ENCODE measurements at regions of chr2 and their contacts with region 1.

Region 1: DNA sequence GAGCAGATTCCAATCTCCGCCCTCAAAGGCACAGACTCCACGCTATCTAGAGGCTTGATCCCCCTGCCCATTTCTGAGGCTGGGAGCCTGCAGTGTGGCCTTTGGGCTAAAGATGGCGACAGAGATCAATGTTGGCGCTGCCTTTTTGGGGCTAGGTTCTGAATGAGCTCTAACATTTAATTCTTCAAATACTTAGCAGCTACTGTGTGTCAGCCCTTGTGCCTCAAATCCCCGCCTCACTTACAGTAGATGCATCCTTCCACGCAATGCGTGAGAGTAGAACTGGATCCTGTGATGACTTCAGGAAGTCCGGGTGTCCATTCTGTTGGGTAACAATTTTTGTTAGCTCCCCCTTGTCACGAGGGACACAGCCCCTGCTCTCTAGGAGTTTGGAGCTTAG is 12.4 kb downstream of the IL1F10 start:
- DNase-seq: peak; percentile 40 to 86 (median 50)
- H3K4me3 ChIP-seq: no peak overlapping the region
- H3K4me3 Mint-ChIP-seq: no peak overlapping the region
- H3K27ac ChIP-seq: no peak overlapping the region
- H3K27ac Mint-ChIP-seq: no peak overlapping the region
- H3K4me1 ChIP-seq: peaks cover 12% of the 10 kb centered on the region in 2 donors
- H3K4me1 Mint-ChIP-seq: peaks cover 34% of the 10 kb centered on the region
- H3K27me3 ChIP-seq: no peaks in the 10 kb centered on the region
- H3K27me3 Mint-ChIP-seq: peaks cover 0 to 5% (median 2%) of the 10 kb centered on the region in 3 donors
- CTCF ChIP-seq: peak; percentile 89

Region 2: GRCh38 chr2:113105047-113105785 is 25.1 kb after region 1 on chr2:
- intact Hi-C with region 1: loop called in 1 of 2 experiments (anchors 2 kb)
- DNase-seq: peak in 2 of 3 donors; percentile 59 to 84
- H3K4me3 ChIP-seq: no peak overlapping the region
- H3K4me3 Mint-ChIP-seq: no peak overlapping the region
- H3K27ac ChIP-seq: no peak overlapping the region
- H3K27ac Mint-ChIP-seq: peak overlapping the region in 3 of 7 donors; percentile 6 to 57 (median 26)
- H3K4me1 ChIP-seq: no peaks in the 10 kb centered on the region
- H3K4me1 Mint-ChIP-seq: peaks cover 13% of the 10 kb centered on the region
- H3K27me3 ChIP-seq: no peaks in the 10 kb centered on the region
- H3K27me3 Mint-ChIP-seq: peaks cover 0 to 7% (median 0%) of the 10 kb centered on the region in 3 donors
- CTCF ChIP-seq: no peak

Region 3: GRCh38 chr2:113126845-113127645 is 46.9 kb after region 1 on chr2 and contains the start of gene IL1RN:
- intact Hi-C with region 1: loop called (anchors 2 to 5 kb)
- DNase-seq: peak; percentile 90 to 98 (median 95)
- H3K4me3 ChIP-seq: peak within 1 kb of the TSS; percentile 75 to 99 (median 89)
- H3K4me3 Mint-ChIP-seq: peak within 1 kb of the TSS; percentile 97 to 98
- H3K27ac ChIP-seq: peak within 1 kb of the TSS; percentile 91 to 95
- H3K27ac Mint-ChIP-seq: peak within 1 kb of the TSS; percentile 97 to 99 (median 99)
- H3K4me1 ChIP-seq: peaks cover 72 to 89% of the 10 kb centered on the region in 2 donors
- H3K4me1 Mint-ChIP-seq: peaks cover 82% of the 10 kb centered on the region
- H3K27me3 ChIP-seq: no peaks in the 10 kb centered on the region
- H3K27me3 Mint-ChIP-seq: peaks cover 0 to 2% (median 0%) of the 10 kb centered on the region in 3 donors
- CTCF ChIP-seq: no peak
- polyA plus RNA-seq, gene IL1RN: 89.9 to 109 (median 92.0) TPM

Region 4: GRCh38 chr2:113198790-113199612 is 118.9 kb after region 1 on chr2:
- intact Hi-C with region 1: loop called (anchors 1 to 5 kb)
- DNase-seq: peak; percentile 64 to 76 (median 64)
- H3K4me3 ChIP-seq: peak overlapping the region; percentile 32 to 76 (median 38)
- H3K4me3 Mint-ChIP-seq: peak overlapping the region; percentile 75 to 84
- H3K27ac ChIP-seq: peak overlapping the region in 1 of 2 donors; percentile 65
- H3K27ac Mint-ChIP-seq: peak overlapping the region in 1 of 7 donors; percentile 73
- H3K4me1 ChIP-seq: peaks cover 8 to 12% of the 10 kb centered on the region in 2 donors
- H3K4me1 Mint-ChIP-seq: peaks cover 6% of the 10 kb centered on the region
- H3K27me3 ChIP-seq: no peaks in the 10 kb centered on the region
- H3K27me3 Mint-ChIP-seq: peaks cover 0 to 1% (median 0%) of the 10 kb centered on the region in 3 donors
- CTCF ChIP-seq: peak; percentile 98

Region 5: GRCh38 chr2:113370478-113371091 is 290.5 kb after region 1 on chr2:
- intact Hi-C with region 1: loop called in 1 of 2 experiments (anchors 10 kb)
- DNase-seq: peak; percentile 52 to 76 (median 74)
- H3K4me3 ChIP-seq: no peak overlapping the region
- H3K4me3 Mint-ChIP-seq: no peak overlapping the region
- H3K27ac ChIP-seq: no peak overlapping the region
- H3K27ac Mint-ChIP-seq: peak overlapping the region in 3 of 7 donors; percentile 68 to 77 (median 71)
- H3K4me1 ChIP-seq: peaks cover 46 to 47% of the 10 kb centered on the region in 2 donors
- H3K4me1 Mint-ChIP-seq: peaks cover 57% of the 10 kb centered on the region
- H3K27me3 ChIP-seq: no peaks in the 10 kb centered on the region
- H3K27me3 Mint-ChIP-seq: peaks cover 0 to 4% (median 0%) of the 10 kb centered on the region in 3 donors
- CTCF ChIP-seq: peak; percentile 74